Caco-2 (cell line): ENCODE measurements at regions of chr15 and their contacts with region 1.

Region 1: DNA sequence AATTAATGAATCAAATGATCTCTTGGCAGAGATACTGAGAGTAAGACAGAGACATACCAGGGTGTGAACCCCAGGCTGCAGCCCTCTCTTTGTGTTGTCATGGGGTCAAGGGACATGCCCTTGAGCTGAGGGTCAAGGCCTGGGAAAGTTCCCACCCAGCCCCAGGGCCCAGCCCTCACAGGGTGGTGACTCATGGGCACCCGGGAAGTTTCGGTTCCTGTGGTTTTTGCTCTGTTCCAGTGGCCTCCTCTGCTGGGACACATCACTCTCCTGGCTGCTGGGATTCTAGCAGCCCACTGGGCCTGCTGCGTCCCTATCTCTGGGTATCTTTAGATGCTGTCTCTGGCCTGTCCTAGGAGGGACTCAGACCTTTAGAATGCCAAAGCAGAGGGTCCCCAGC is 148.2 kb upstream of the TLE3 start:
- DNase-seq: no peak
- H3K4me3 ChIP-seq: no peak overlapping the region
- H3K4me3 Mint-ChIP-seq: no peak overlapping the region
- H3K27ac Mint-ChIP-seq: no peak overlapping the region
- H3K4me1 ChIP-seq: peaks cover 8% of the 10 kb centered on the region; the same call in 1 of the 2 replicates
- H3K4me1 Mint-ChIP-seq: peaks cover 14% of the 10 kb centered on the region
- H3K27me3 ChIP-seq: no peaks in the 10 kb centered on the region
- H3K27me3 Mint-ChIP-seq: no peaks in the 10 kb centered on the region
- CTCF ChIP-seq: no peak

Region 2: GRCh38 chr15:70192041-70192440 is 53.9 kb before region 1 on chr15:
- CTCF ChIA-PET with region 1: no interaction called
- POLR2A ChIA-PET with region 1: no interaction called
- intact Hi-C with region 1: no loop called
- DNase-seq: no peak
- H3K4me3 ChIP-seq: no peak overlapping the region
- H3K4me3 Mint-ChIP-seq: no peak overlapping the region
- H3K27ac Mint-ChIP-seq: no peak overlapping the region
- H3K4me1 ChIP-seq: peaks cover 27% of the 10 kb centered on the region
- H3K4me1 Mint-ChIP-seq: peaks cover 13% of the 10 kb centered on the region
- H3K27me3 ChIP-seq: no peaks in the 10 kb centered on the region
- H3K27me3 Mint-ChIP-seq: no peaks in the 10 kb centered on the region
- CTCF ChIP-seq: no peak

Region 3: DNA sequence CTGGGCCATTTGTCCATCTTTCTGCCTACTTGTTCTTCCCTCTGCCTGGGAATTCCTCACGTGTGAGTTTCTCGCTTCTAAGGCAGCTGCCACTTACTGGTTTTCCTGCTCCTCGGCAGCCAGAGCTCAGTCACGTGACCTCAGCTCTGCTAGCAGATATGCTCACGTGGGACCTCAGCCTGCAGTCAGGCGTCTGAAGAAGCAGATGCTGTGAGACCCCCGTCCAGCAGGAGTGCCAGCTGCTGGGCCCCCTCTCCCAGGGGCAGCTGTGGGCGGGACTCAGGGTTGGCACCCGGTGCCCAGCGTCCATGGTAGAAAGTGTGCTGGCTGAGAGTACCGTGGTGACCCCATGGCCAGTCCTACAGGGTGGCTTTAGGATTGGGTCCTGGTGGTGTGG is 13.1 kb after region 1 on chr15:
- CTCF ChIA-PET with region 1: no interaction called
- POLR2A ChIA-PET with region 1: no interaction called
- intact Hi-C with region 1: no loop called
- DNase-seq: no peak
- H3K4me3 ChIP-seq: no peak overlapping the region
- H3K4me3 Mint-ChIP-seq: no peak overlapping the region
- H3K27ac Mint-ChIP-seq: no peak overlapping the region
- H3K4me1 ChIP-seq: no peaks in the 10 kb centered on the region
- H3K4me1 Mint-ChIP-seq: no peaks in the 10 kb centered on the region
- H3K27me3 ChIP-seq: no peaks in the 10 kb centered on the region
- H3K27me3 Mint-ChIP-seq: no peaks in the 10 kb centered on the region
- CTCF ChIP-seq: no peak

Region 4: DNA sequence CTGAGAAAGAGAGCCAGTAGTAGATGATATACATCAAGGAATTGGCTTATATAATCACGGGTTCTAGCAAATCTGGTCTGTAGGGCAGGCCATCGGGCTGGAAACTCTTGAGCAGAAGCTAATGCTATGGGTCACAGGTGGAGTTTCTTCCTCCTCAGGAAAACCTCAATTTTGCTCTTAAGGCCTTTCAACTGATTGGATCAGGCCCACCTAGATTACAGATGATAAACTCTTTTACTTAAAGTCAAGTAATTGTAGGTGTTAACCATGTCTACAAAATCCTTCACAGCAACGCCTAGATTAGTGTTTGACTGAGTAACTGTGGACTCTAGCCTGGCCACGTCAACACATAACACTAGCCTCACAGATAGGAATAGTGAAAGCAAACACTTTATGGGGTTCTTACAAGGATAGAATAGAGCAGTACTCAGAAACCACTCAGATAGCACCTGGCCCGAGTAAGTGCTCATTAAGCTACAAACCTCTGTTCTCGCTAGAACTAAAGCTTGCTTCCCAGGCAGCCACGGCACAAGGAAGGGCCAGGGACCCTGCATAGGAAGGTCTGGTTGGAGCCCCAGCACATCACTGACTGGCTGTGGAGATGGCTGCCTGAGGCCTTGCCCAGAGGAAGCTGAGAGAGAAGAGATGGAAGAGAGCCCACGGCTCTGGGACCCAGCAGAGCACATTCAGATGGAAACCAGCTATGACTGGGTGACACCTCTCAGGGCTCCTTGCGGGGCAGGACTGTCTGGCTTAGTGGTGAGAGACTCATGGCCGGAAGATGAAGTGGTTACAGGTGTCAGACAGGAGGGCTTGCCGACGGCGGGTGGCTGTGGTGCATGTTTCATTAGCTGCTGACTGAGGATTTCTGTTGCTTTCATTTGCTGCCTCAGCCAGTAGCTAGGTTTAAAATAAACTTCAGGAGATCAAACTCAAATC is 54.3 kb after region 1 on chr15:
- CTCF ChIA-PET with region 1: no interaction called
- POLR2A ChIA-PET with region 1: no interaction called
- intact Hi-C with region 1: loop called (anchors 10 kb)
- DNase-seq: no peak
- H3K4me3 ChIP-seq: no peak overlapping the region
- H3K4me3 Mint-ChIP-seq: no peak overlapping the region
- H3K27ac Mint-ChIP-seq: no peak overlapping the region
- H3K4me1 ChIP-seq: no peaks in the 10 kb centered on the region
- H3K4me1 Mint-ChIP-seq: no peaks in the 10 kb centered on the region
- H3K27me3 ChIP-seq: no peaks in the 10 kb centered on the region
- H3K27me3 Mint-ChIP-seq: no peaks in the 10 kb centered on the region
- CTCF ChIP-seq: no peak

Region 5: DNA sequence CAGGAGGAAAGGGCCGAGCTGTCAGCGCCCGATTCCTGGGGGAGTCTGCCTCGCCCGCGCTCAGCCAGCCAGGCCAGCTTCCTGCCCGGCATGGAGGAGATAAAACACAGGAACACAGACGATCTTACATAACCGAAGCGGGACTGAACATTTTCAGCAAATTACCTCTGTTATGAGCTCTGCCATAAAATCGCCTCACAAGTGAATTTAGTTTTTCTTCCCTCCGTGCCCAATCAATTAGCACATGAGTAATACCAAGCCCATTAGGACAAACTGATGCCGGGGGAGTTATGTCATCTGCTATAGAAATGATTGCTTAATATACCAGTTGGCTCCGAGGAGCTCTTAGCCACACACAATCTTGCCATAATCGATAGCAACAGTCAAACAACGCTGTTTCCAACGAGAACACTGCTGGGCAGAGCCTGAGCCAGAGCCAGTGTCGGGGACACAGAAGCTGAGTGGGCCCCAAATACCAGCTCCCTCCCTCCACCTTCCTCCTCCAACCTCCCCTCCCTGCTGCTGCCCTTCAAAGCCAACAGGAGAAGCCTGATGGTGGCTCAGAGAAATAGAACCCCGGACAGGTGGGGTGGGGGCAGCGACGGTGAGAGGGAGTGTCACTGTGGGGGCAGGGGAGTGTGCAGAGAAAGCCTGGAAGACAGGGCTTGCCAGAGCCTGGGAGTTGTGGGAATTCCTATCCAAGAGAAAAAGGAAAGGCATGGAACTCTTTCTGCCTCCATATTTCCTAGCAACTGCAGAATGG is 131.2 kb after region 1 on chr15:
- CTCF ChIA-PET with region 1: no interaction called
- POLR2A ChIA-PET with region 1: no interaction called
- intact Hi-C with region 1: no loop called
- DNase-seq: no peak
- H3K4me3 ChIP-seq: no peak overlapping the region
- H3K4me3 Mint-ChIP-seq: no peak overlapping the region
- H3K27ac Mint-ChIP-seq: no peak overlapping the region
- H3K4me1 ChIP-seq: no peaks in the 10 kb centered on the region
- H3K4me1 Mint-ChIP-seq: no peaks in the 10 kb centered on the region
- H3K27me3 ChIP-seq: no peaks in the 10 kb centered on the region
- H3K27me3 Mint-ChIP-seq: no peaks in the 10 kb centered on the region
- CTCF ChIP-seq: no peak